Activated CD8-positive, alpha-beta T cell treated with anti-CD3 and anti-CD28 coated beads for 36 hours (primary cell): ENCODE measurements at regions of chr7 and their contacts with region 1.

Region 1: GRCh38 chr7:50418086-50418515 is 32.0 kb downstream of the FIGNL1 start:
- DNase-seq: peak; percentile 90
- ATAC-seq: peak; percentile 93
- H3K4me3 Mint-ChIP-seq: no peak overlapping the region
- H3K27ac Mint-ChIP-seq: no peak overlapping the region
- H3K4me1 Mint-ChIP-seq: peaks cover 26% of the 10 kb centered on the region
- H3K27me3 Mint-ChIP-seq: no peaks in the 10 kb centered on the region
- CTCF ChIP-seq: peak; percentile 90

Region 2: GRCh38 chr7:50119815-50120637 is 298.1 kb before region 1 on chr7:
- CTCF ChIA-PET with region 1: interaction called, 15 read pairs
- POLR2A ChIA-PET with region 1: no interaction called
- intact Hi-C with region 1: no loop called
- DNase-seq: peak; percentile 64
- ATAC-seq: peak; percentile 81
- H3K4me3 Mint-ChIP-seq: no peak overlapping the region
- H3K27ac Mint-ChIP-seq: no peak overlapping the region
- H3K4me1 Mint-ChIP-seq: no peaks in the 10 kb centered on the region
- H3K27me3 Mint-ChIP-seq: peaks cover 2% of the 10 kb centered on the region
- CTCF ChIP-seq: peak; percentile 64

Region 3: DNA sequence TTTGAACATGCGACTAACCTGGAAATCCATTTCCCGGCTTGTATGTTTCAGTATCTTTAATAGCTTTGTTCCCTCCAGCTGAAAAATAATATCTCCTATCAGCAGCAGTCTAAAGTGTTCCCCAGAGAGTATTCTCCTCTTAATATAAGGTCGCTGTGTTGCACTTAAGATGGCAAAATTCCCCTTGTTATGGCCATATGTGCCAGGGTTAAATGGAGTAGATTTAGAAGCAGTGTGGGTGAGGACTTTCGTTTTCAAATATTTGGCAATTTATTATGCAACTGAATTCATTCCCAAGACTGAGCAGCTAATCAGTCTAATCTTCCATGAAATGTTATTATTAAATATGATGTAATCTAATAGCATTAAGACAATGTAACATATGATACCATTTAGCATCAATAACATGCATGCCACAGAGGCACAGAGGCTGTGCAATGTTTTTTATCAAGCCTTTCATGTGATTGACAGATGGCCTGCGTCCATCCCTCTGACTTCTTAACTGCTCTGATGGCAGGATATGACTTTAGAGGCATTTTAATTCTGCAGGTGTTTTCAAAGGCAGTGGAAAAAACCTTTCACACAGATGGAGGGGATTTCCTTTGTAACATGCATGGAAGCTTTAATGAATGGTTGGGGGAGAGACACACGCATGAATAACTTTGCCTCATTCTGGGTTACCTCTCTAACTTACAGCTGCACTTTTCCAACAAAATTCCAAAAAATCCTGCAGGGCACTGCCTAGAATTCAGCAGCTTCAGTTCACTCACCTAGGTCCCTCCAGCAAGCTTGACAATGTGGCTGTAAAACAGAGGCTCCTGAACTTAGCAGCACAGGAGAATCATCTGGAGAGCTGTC is 269.9 kb before region 1 on chr7:
- CTCF ChIA-PET with region 1: interaction called, 67 read pairs
- POLR2A ChIA-PET with region 1: interaction called, 3 read pairs
- intact Hi-C with region 1: no loop called
- DNase-seq: peak; percentile 77
- ATAC-seq: peak; percentile 82
- H3K4me3 Mint-ChIP-seq: peak overlapping the region; percentile 59
- H3K27ac Mint-ChIP-seq: peak overlapping the region; percentile 97
- H3K4me1 Mint-ChIP-seq: peaks cover 89% of the 10 kb centered on the region
- H3K27me3 Mint-ChIP-seq: no peaks in the 10 kb centered on the region
- CTCF ChIP-seq: no peak

Region 4: DNA sequence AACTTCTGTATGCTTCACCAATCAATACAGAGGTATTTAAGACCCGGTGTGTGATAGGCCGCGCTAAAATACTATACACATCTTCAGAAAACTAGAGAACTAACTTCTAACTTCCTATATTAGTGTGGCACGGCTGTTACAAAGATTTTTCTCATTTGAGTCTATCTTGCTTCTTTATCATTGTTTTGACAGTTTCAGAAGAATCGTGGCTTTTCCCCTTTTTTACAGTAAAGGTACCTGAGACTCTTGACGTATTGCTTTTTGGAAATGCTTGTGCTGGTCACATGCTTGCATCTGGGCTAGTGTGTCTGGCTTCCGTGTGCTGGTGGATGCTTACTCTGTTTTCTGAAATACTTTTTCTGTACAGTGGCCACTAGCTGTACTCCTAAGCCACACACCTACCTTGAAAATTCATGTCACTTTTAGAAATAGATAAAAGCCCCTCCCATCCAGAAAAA is 100.9 kb before region 1 on chr7:
- CTCF ChIA-PET with region 1: interaction called, 12 read pairs
- POLR2A ChIA-PET with region 1: interaction called, 4 read pairs
- intact Hi-C with region 1: no loop called
- DNase-seq: peak; percentile 75
- ATAC-seq: peak; percentile 82
- H3K4me3 Mint-ChIP-seq: peak overlapping the region; percentile 94
- H3K27ac Mint-ChIP-seq: peak overlapping the region; percentile 97
- H3K4me1 Mint-ChIP-seq: peaks cover 88% of the 10 kb centered on the region
- H3K27me3 Mint-ChIP-seq: no peaks in the 10 kb centered on the region
- CTCF ChIP-seq: peak; percentile 7

Region 5: GRCh38 chr7:50379082-50379481 is 39.0 kb before region 1 on chr7:
- CTCF ChIA-PET with region 1: interaction called, 26 read pairs
- POLR2A ChIA-PET with region 1: interaction called, 4 read pairs
- intact Hi-C with region 1: no loop called
- DNase-seq: no peak
- ATAC-seq: peak; percentile 13
- H3K4me3 Mint-ChIP-seq: no peak overlapping the region
- H3K27ac Mint-ChIP-seq: peak overlapping the region; percentile 81
- H3K4me1 Mint-ChIP-seq: peaks cover 90% of the 10 kb centered on the region
- H3K27me3 Mint-ChIP-seq: no peaks in the 10 kb centered on the region
- CTCF ChIP-seq: no peak

Region 6: DNA sequence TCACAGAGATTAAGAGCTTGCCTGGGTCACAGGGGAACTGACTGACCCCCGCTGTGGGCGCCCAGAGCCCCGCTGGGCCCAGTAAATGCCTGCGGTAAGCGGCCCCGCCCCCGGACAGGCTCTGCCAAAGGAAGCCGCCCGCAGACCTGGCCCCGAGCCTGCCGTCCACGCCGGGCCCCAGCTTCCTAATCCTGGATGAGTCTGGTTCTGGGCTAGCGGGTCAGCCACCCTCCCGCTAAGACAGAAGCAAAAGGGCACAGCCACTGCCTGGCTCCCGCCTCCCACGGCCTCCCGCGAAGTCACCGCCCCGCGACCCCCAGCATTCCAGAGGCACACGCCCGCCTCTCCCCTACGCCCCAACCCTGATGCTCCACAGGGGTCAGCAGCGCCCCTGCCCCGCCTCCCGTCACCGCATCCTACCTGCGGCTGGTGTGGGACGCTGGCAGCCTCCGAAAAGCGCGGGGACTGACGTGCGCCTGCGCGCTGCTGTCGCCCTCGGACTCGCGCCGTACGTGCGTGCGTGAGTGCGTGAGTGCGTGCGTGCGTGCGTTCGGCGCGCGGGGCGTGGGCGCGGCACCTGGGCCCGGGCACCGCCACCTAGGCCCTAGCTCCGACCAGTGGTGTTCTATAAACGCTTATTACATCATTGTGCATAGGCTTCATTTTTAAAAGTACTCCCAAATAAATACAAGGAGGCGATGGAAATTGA is 31.9 kb after region 1 on chr7 and contains the start of gene FIGNL1:
- CTCF ChIA-PET with region 1: interaction called, 23 read pairs
- POLR2A ChIA-PET with region 1: no interaction called
- intact Hi-C with region 1: no loop called
- DNase-seq: peak; percentile 90
- ATAC-seq: peak; percentile 89
- H3K4me3 Mint-ChIP-seq: peak within 1 kb of the TSS; percentile 92
- H3K27ac Mint-ChIP-seq: peak within 1 kb of the TSS; percentile 96
- H3K4me1 Mint-ChIP-seq: peaks cover 42% of the 10 kb centered on the region
- H3K27me3 Mint-ChIP-seq: no peaks in the 10 kb centered on the region
- CTCF ChIP-seq: no peak
- total RNA-seq, gene FIGNL1: 46.8 to 47.2 TPM